K562 (cell line): ENCODE measurements at regions of chr10 and their contacts with region 1.

Region 1: GRCh38 chr10:110497438-110498086 is at the start of gene DUSP5:
- DNase-seq: peak; percentile 86 to 94 (median 90)
- ATAC-seq: peak; percentile 84
- H3K4me3 ChIP-seq: peak within 1 kb of the TSS; percentile 69
- H3K27ac ChIP-seq: peak within 1 kb of the TSS; percentile 69; the same call in 2 of the 3 replicates
- H3K4me1 ChIP-seq: peaks cover 39 to 44% of the 10 kb centered on the region in 2 experiments
- H3K27me3 ChIP-seq: no peaks in the 10 kb centered on the region
- CTCF ChIP-seq: no peak
- EP300 ChIP-seq: no peak
- POLR2A ChIP-seq: peak; percentile 78
- RAD21 ChIP-seq: no peak
- polyA plus RNA-seq, gene DUSP5: 0.49 to 0.71 TPM

Region 2: GRCh38 chr10:110304780-110305421 is 192.7 kb before region 1 on chr10 and contains the start of gene SMNDC1:
- CTCF ChIA-PET with region 1: interaction called, 3 read pairs
- POLR2A ChIA-PET with region 1: no interaction called
- in situ Hi-C with region 1: no loop called
- intact Hi-C with region 1: loop called (anchors 5 kb)
- DNase-seq: peak; percentile 88 to 96 (median 90)
- ATAC-seq: peak; percentile 92
- H3K4me3 ChIP-seq: peak within 1 kb of the TSS; percentile 89
- H3K27ac ChIP-seq: peak within 1 kb of the TSS; percentile 87
- H3K4me1 ChIP-seq: peaks cover 0 to 11% of the 10 kb centered on the region in 2 experiments; a peak in 2 of 5 replicates
- H3K27me3 ChIP-seq: no peaks in the 10 kb centered on the region
- CTCF ChIP-seq: no peak
- EP300 ChIP-seq: no peak
- POLR2A ChIP-seq: peak; percentile 75
- RAD21 ChIP-seq: no peak
- polyA plus RNA-seq, gene SMNDC1: 9.2 to 9.9 TPM

Region 3: GRCh38 chr10:110354322-110354766 is 143.2 kb before region 1 on chr10:
- CTCF ChIA-PET with region 1: interaction called, 4 read pairs
- POLR2A ChIA-PET with region 1: no interaction called
- in situ Hi-C with region 1: no loop called
- intact Hi-C with region 1: loop called (anchors 5 kb)
- DNase-seq: peak; percentile 49 to 75 (median 56)
- ATAC-seq: peak; percentile 94
- H3K4me3 ChIP-seq: no peak overlapping the region
- H3K27ac ChIP-seq: no peak overlapping the region
- H3K4me1 ChIP-seq: peaks cover 0 to 8% of the 10 kb centered on the region in 2 experiments; a peak in 3 of 5 replicates
- H3K27me3 ChIP-seq: peaks cover 0 to 45% of the 10 kb centered on the region in 2 experiments; a peak in 4 of 5 replicates
- CTCF ChIP-seq: peak; percentile 74 to 83 (median 81)
- EP300 ChIP-seq: no peak
- POLR2A ChIP-seq: no peak
- RAD21 ChIP-seq: peak; percentile 49 to 83

Region 4: GRCh38 chr10:110387983-110388687 is 109.4 kb before region 1 on chr10:
- CTCF ChIA-PET with region 1: no interaction called
- POLR2A ChIA-PET with region 1: no interaction called
- in situ Hi-C with region 1: no loop called
- intact Hi-C with region 1: loop called (anchors 5 kb)
- DNase-seq: no peak
- ATAC-seq: no peak; the same call in 2 of the 3 replicates
- H3K4me3 ChIP-seq: no peak overlapping the region
- H3K27ac ChIP-seq: no peak overlapping the region
- H3K4me1 ChIP-seq: peaks cover 0 to 11% of the 10 kb centered on the region in 2 experiments; a peak in 2 of 5 replicates
- H3K27me3 ChIP-seq: peaks cover 0 to 21% of the 10 kb centered on the region in 2 experiments; a peak in 2 of 5 replicates
- CTCF ChIP-seq: no peak
- EP300 ChIP-seq: no peak
- POLR2A ChIP-seq: no peak
- RAD21 ChIP-seq: no peak

Region 5: GRCh38 chr10:110446954-110447608 is 50.5 kb before region 1 on chr10:
- CTCF ChIA-PET with region 1: no interaction called
- POLR2A ChIA-PET with region 1: no interaction called
- in situ Hi-C with region 1: no loop called
- intact Hi-C with region 1: loop called (anchors 5 kb)
- DNase-seq: peak in 2 of 4 experiments; percentile 56 to 64
- ATAC-seq: peak; percentile 86
- H3K4me3 ChIP-seq: no peak overlapping the region
- H3K27ac ChIP-seq: no peak overlapping the region
- H3K4me1 ChIP-seq: peaks cover 0 to 13% of the 10 kb centered on the region in 2 experiments; a peak in 4 of 5 replicates
- H3K27me3 ChIP-seq: no peaks in the 10 kb centered on the region
- CTCF ChIP-seq: peak in 2 of 3 experiments; percentile 13 to 29; a peak in 1 of 6 replicates
- EP300 ChIP-seq: 0 out of 2 replicates have a peak, but pooled peaks have one; percentile 32
- POLR2A ChIP-seq: no peak
- RAD21 ChIP-seq: peak in 1 of 2 experiments; percentile 27; a peak in 1 of 4 replicates

Region 6: GRCh38 chr10:110535958-110536891 is 38.7 kb after region 1 on chr10:
- CTCF ChIA-PET with region 1: no interaction called
- POLR2A ChIA-PET with region 1: no interaction called
- in situ Hi-C with region 1: no loop called
- intact Hi-C with region 1: loop called (anchors 5 kb)
- DNase-seq: peak in 2 of 4 experiments; percentile 28 to 54
- ATAC-seq: peak; percentile 92
- H3K4me3 ChIP-seq: no peak overlapping the region
- H3K27ac ChIP-seq: no peak overlapping the region
- H3K4me1 ChIP-seq: peaks cover 0 to 4% of the 10 kb centered on the region in 2 experiments; a peak in 2 of 5 replicates
- H3K27me3 ChIP-seq: no peaks in the 10 kb centered on the region
- CTCF ChIP-seq: peak; percentile 60 to 75 (median 62)
- EP300 ChIP-seq: no peak
- POLR2A ChIP-seq: no peak
- RAD21 ChIP-seq: peak; percentile 77 to 89